Vagina (tissue), 2 donors: ENCODE measurements at regions of chr5 and their contacts with region 1.

Region 1: DNA sequence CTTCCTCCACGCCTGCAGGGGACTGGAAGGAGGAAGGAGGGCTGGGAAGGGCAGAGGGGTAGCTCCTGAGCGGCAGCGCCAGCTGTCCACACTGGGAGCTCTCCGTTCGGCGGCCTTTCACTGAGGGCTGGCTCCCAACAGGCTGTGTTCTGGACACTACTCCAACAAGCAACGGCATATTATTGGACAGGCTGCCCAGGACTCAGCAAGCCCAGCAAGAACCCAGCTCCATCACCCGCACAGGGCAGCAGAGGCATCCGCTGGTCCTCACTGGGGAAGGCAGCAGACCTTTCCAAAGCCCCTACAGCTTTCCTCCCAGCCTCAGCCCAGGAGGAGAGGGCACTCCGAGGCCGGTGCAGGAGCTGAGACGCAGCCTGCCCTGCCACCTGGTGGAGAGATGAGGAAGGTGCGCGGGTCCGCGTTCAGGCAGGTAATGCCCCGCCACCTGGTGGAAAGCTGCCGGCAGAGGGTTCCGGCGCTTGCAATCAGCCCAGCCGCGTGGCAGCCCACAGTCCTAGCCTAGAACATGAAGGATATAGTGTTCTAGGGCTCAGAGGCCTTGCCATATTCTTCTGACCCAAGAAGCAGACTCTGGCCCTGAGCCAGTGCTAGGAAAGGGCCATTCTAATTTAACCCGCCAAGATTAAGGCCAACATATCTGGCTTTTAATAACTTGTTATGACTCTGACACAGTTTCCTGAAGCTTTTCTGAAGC is 74.4 kb downstream of the NRG2 start:
- DNase-seq: peak; percentile 84 to 96
- H3K4me3 ChIP-seq: no peak overlapping the region
- H3K27ac ChIP-seq: no peak overlapping the region
- H3K4me1 ChIP-seq: no peaks in the 10 kb centered on the region
- H3K27me3 ChIP-seq: no peaks in the 10 kb centered on the region
- CTCF ChIP-seq: peak; percentile 98 to 100 (median 99)
- POLR2A ChIP-seq: no peak

Region 2: DNA sequence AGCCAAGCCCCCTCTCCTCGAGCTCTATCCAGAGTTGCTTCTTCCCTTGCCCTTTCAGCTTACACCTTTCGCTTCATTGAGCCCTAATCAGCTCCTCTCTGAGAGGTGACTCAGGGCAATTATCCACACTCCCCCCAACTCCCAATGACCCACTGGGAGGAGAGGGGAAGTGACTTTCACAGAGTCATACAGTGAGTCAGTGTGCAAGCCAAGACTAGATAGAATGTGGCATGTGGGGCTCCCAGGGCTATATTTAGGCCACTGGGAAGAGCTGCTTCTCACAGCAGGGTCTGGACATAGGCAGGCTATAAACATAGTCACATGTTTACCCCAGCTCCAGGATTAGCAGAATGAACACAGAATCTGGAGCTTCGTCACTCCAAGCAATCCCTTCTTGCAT is 17.0 kb after region 1 on chr5:
- intact Hi-C with region 1: loop called (anchors 2 kb)
- DNase-seq: no peak
- H3K4me3 ChIP-seq: no peak overlapping the region
- H3K27ac ChIP-seq: no peak overlapping the region
- H3K4me1 ChIP-seq: no peaks in the 10 kb centered on the region
- H3K27me3 ChIP-seq: no peaks in the 10 kb centered on the region
- CTCF ChIP-seq: no peak
- POLR2A ChIP-seq: no peak

Region 3: GRCh38 chr5:140710899-140711552 is 742.3 kb after region 1 on chr5:
- intact Hi-C with region 1: no loop called
- DNase-seq: peak in 1 of 2 donors; percentile 98
- H3K4me3 ChIP-seq: peak overlapping the region; percentile 55 to 66
- H3K27ac ChIP-seq: peak overlapping the region; percentile 96
- H3K4me1 ChIP-seq: peaks cover 3% of the 10 kb centered on the region
- H3K27me3 ChIP-seq: no peaks in the 10 kb centered on the region
- CTCF ChIP-seq: no peak
- POLR2A ChIP-seq: peak in 1 of 2 donors; percentile 5